Gastrocnemius medialis (tissue), 4 donors: ENCODE measurements at regions of chr6 and their contacts with region 1.

Region 1: GRCh38 chr6:43769526-43770416 is at the start of gene VEGFA:
- DNase-seq: peak; percentile 80 to 89
- ATAC-seq: peak; percentile 51 to 55
- H3K4me3 ChIP-seq: peak within 1 kb of the TSS; percentile 74 to 91 (median 85)
- H3K27ac ChIP-seq: peak within 1 kb of the TSS; percentile 94 to 100 (median 98)
- H3K4me1 ChIP-seq: peaks cover 4 to 20% of the 10 kb centered on the region in 2 donors
- H3K27me3 ChIP-seq: no peaks in the 10 kb centered on the region
- CTCF ChIP-seq: peak; percentile 99 to 100 (median 99)
- POLR2A ChIP-seq: peak; percentile 97 to 98
- total RNA-seq, gene VEGFA: 66.4 to 195 (median 149) TPM

Region 2: GRCh38 chr6:43744931-43745710 is 24.6 kb before region 1 on chr6:
- in situ Hi-C with region 1: no loop called
- intact Hi-C with region 1: loop called (anchors 1 kb)
- DNase-seq: no peak
- ATAC-seq: no peak
- H3K4me3 ChIP-seq: no peak overlapping the region
- H3K27ac ChIP-seq: no peak overlapping the region
- H3K4me1 ChIP-seq: no peaks in the 10 kb centered on the region
- H3K27me3 ChIP-seq: no peaks in the 10 kb centered on the region
- CTCF ChIP-seq: no peak
- POLR2A ChIP-seq: no peak

Region 3: DNA sequence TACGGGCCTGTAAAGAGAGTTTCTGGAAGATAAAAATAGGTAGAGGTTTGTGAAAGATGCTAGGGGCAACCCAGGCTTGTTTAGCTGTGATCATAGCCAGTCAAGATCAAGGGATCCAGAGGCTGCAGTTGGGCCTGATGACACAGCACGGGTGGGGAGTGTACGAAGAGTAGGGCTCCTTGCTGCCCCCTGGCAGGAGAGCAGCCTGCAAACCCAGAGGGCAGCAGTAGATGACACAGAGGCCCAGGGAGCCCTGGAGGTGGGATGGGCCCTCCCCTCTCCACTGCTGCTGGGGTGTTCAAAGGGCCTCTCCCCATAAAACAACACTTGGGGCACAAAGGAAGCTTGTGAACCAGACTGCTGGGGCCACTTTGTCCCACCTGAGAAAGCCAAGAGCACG is 47.4 kb after region 1 on chr6:
- in situ Hi-C with region 1: no loop called
- intact Hi-C with region 1: loop called (anchors 2 kb)
- DNase-seq: peak; percentile 48 to 80
- ATAC-seq: peak; percentile 52 to 88
- H3K4me3 ChIP-seq: no peak overlapping the region
- H3K27ac ChIP-seq: peak overlapping the region in 3 of 4 donors; percentile 27 to 33 (median 33)
- H3K4me1 ChIP-seq: peaks cover 6 to 10% of the 10 kb centered on the region in 2 donors
- H3K27me3 ChIP-seq: no peaks in the 10 kb centered on the region
- CTCF ChIP-seq: peak; percentile 13 to 57 (median 43)
- POLR2A ChIP-seq: no peak

Region 4: GRCh38 chr6:43951063-43951755 is 181.4 kb after region 1 on chr6:
- in situ Hi-C with region 1: loop called in 1 of 4 experiments (anchors 10 kb)
- intact Hi-C with region 1: loop called (anchors 1 kb)
- DNase-seq: peak in 1 of 2 donors; percentile 64
- ATAC-seq: no peak
- H3K4me3 ChIP-seq: no peak overlapping the region
- H3K27ac ChIP-seq: peak overlapping the region; percentile 85 to 97 (median 88)
- H3K4me1 ChIP-seq: peaks cover 14 to 21% of the 10 kb centered on the region in 2 donors
- H3K27me3 ChIP-seq: no peaks in the 10 kb centered on the region
- CTCF ChIP-seq: peak; percentile 31 to 64 (median 46)
- POLR2A ChIP-seq: no peak

Region 5: DNA sequence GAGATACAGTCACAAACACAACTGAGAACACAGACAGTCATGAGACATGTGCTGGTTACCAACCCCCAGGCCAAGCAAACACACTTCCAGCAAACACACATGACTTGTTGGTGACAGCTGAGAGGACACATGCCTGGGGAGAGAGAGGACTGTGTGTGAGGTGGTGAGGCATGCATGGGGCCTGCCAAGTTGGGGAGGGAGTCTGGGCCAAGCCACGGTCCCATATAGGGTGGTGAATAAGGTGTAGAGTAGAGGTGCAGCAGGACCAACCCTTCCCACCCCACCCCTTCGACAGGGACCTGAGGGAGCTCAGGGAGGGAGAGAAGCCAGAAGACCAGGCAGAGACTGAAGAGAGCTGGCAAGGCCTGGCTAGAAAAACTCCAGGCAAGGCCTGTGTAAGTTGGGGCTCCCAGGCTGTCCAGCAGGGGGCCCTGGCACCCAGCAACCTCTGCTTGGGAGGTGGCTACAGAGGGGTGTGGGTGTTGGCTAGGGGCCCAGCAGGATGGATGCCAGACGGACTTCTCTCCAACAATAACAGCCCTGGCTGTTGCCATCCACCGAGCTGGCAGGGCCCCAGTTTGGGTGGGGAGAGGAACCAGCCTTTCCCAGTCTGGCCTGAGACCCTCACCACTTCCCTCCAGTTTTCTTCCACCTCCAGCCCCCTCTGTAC is 451.7 kb after region 1 on chr6:
- in situ Hi-C with region 1: no loop called
- intact Hi-C with region 1: loop called (anchors 5 kb)
- DNase-seq: peak; percentile 94 to 96
- ATAC-seq: peak; percentile 77 to 79
- H3K4me3 ChIP-seq: peak overlapping the region in 2 of 4 donors; percentile 21 to 62
- H3K27ac ChIP-seq: peak overlapping the region; percentile 95 to 99 (median 98)
- H3K4me1 ChIP-seq: peaks cover 71 to 88% of the 10 kb centered on the region in 2 donors
- H3K27me3 ChIP-seq: no peaks in the 10 kb centered on the region
- CTCF ChIP-seq: peak; percentile 51 to 89 (median 72)
- POLR2A ChIP-seq: peak; percentile 49 to 58